ENCODE measurements at regions of chr5 and their contacts with region 1.

Region 1: GRCh38 chr5:23269981-23270380 is 237.4 kb upstream of the PRDM9 start:
- DNase-seq: no peak
- ATAC-seq: no peak
- H3K4me3 ChIP-seq: no peak overlapping the region
- H3K4me3 Mint-ChIP-seq: no peak overlapping the region
- H3K27ac ChIP-seq: no peak overlapping the region
- H3K27ac Mint-ChIP-seq: no peak overlapping the region
- H3K4me1 ChIP-seq: no peaks in the 10 kb centered on the region
- H3K4me1 Mint-ChIP-seq: no peaks in the 10 kb centered on the region
- H3K27me3 ChIP-seq: no peaks in the 10 kb centered on the region
- H3K27me3 Mint-ChIP-seq: no peaks in the 10 kb centered on the region

Region 2: DNA sequence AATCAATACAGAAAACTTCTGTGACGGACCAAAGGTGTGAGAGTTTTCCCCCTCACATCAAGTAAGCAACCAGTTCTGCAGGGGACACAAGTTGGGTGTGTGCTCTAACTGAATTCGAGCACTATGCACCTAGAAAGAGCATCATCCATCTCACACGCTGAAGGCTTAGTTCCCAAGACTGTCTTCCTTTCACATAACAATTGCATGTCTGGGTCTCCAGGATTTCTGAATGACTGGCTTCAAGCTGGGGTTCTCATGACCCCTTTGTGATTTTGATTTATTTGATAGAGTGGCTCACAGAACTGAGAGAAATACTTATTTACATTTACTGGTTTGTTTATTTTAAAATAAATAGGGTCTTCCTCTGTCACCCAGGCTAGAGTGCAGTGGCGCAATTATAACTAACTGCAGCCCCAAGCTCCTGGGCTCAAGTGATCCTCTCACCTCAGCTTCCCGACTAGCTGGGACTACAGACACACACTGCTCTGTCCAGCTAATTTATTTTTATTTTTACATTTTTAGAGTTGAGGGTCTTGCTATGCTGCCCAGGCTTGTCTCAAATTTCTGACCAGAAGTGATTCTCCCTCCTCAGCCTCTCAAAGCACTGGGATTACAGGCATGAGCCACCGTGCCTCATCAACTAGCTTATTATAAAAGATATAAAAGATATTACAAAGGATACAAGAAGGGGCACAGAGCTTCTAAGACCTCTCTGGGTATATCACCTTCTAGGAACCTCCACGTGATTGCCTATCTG is 100.1 kb before region 1 on chr5:
- CTCF ChIA-PET with region 1: no interaction called
- POLR2A ChIA-PET with region 1: no interaction called
- intact Hi-C with region 1: no loop called
- DNase-seq: no peak
- ATAC-seq: no peak
- H3K4me3 ChIP-seq: no peak overlapping the region
- H3K4me3 Mint-ChIP-seq: no peak overlapping the region
- H3K27ac ChIP-seq: no peak overlapping the region
- H3K27ac Mint-ChIP-seq: no peak overlapping the region
- H3K4me1 ChIP-seq: no peaks in the 10 kb centered on the region
- H3K4me1 Mint-ChIP-seq: no peaks in the 10 kb centered on the region
- H3K27me3 ChIP-seq: no peaks in the 10 kb centered on the region
- H3K27me3 Mint-ChIP-seq: no peaks in the 10 kb centered on the region

Region 3: DNA sequence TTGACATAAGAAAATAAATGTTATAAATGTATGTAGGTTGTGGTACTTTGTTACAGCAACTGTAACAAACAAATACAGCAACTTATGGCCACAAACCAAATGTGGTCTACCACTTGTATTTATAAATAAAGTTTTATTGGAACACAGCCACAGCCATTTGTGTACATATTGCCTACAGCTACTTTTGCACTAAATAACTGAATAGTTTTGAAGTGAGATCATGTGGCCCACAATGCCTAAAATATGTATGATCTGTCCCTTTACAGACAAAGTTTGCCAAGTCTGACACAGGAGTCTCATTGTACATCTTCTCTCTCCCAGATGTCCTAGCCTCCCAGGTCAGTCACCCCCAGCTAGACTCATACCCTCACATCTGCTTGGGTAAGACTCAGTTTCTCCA is 46.1 kb before region 1 on chr5:
- CTCF ChIA-PET with region 1: no interaction called
- POLR2A ChIA-PET with region 1: no interaction called
- intact Hi-C with region 1: no loop called
- DNase-seq: no peak
- ATAC-seq: no peak
- H3K4me3 ChIP-seq: no peak overlapping the region
- H3K4me3 Mint-ChIP-seq: no peak overlapping the region
- H3K27ac ChIP-seq: no peak overlapping the region
- H3K27ac Mint-ChIP-seq: no peak overlapping the region
- H3K4me1 ChIP-seq: no peaks in the 10 kb centered on the region
- H3K4me1 Mint-ChIP-seq: no peaks in the 10 kb centered on the region
- H3K27me3 ChIP-seq: no peaks in the 10 kb centered on the region
- H3K27me3 Mint-ChIP-seq: no peaks in the 10 kb centered on the region

Region 4: DNA sequence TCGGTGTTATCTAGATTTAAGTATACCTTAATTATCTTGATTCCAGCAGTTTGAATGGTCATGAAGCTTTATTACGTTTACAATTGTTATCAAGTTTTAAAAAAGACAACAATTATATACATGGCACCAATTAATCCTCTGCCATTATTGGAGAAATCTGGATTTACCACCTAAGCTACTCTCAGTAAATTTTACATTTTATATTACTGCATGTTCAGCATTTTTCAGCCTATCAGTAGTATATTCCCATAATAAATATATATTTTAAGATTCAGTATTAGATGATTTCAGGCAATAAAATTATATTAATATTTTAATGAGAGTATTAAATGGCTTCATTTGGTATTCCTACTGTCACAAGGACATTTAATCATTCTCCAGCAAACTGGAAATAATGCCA is 27.1 kb before region 1 on chr5:
- CTCF ChIA-PET with region 1: no interaction called
- POLR2A ChIA-PET with region 1: no interaction called
- intact Hi-C with region 1: loop called in 1 of 2 experiments (anchors 1 kb)
- DNase-seq: no peak
- ATAC-seq: no peak
- H3K4me3 ChIP-seq: no peak overlapping the region
- H3K4me3 Mint-ChIP-seq: no peak overlapping the region
- H3K27ac ChIP-seq: no peak overlapping the region
- H3K27ac Mint-ChIP-seq: no peak overlapping the region
- H3K4me1 ChIP-seq: no peaks in the 10 kb centered on the region
- H3K4me1 Mint-ChIP-seq: no peaks in the 10 kb centered on the region
- H3K27me3 ChIP-seq: no peaks in the 10 kb centered on the region
- H3K27me3 Mint-ChIP-seq: no peaks in the 10 kb centered on the region

Region 5: GRCh38 chr5:23257656-23258055 is 12.3 kb before region 1 on chr5:
- CTCF ChIA-PET with region 1: no interaction called
- POLR2A ChIA-PET with region 1: no interaction called
- intact Hi-C with region 1: no loop called
- DNase-seq: no peak
- ATAC-seq: no peak
- H3K4me3 ChIP-seq: no peak overlapping the region
- H3K4me3 Mint-ChIP-seq: no peak overlapping the region
- H3K27ac ChIP-seq: no peak overlapping the region
- H3K27ac Mint-ChIP-seq: no peak overlapping the region
- H3K4me1 ChIP-seq: no peaks in the 10 kb centered on the region
- H3K4me1 Mint-ChIP-seq: no peaks in the 10 kb centered on the region
- H3K27me3 ChIP-seq: no peaks in the 10 kb centered on the region
- H3K27me3 Mint-ChIP-seq: no peaks in the 10 kb centered on the region

Measured in naive thymus-derived CD4-positive, alpha-beta T cell (primary cell).